ENCODE measurements at regions of chr9 and their contacts with region 1.

Region 1: DNA sequence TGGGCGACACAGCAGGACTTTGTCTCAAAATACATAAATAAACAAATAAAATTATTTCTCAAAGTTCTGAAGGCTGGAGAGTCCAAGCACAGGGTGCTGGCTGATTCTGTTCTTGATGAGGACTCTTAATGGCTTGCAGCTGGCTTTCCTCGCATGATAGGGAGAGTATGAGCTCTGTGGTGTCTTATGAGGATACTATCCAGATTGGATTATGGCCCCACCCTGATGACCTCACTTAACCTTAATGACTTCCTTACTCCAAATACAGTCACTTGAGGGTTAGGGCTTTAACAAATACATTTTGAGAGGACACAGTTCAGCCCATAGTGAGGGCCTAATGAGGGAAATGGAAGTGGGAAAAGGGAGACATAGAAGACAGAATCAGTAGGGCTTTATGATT is 87.7 kb downstream of the FOCAD start:
- DNase-seq: no peak
- H3K4me3 ChIP-seq: no peak overlapping the region
- H3K27ac ChIP-seq: no peak overlapping the region
- H3K4me1 ChIP-seq: no peaks in the 10 kb centered on the region
- H3K27me3 ChIP-seq: no peaks in the 10 kb centered on the region
- CTCF ChIP-seq: no peak
- POLR2A ChIP-seq: no peak

Region 2: DNA sequence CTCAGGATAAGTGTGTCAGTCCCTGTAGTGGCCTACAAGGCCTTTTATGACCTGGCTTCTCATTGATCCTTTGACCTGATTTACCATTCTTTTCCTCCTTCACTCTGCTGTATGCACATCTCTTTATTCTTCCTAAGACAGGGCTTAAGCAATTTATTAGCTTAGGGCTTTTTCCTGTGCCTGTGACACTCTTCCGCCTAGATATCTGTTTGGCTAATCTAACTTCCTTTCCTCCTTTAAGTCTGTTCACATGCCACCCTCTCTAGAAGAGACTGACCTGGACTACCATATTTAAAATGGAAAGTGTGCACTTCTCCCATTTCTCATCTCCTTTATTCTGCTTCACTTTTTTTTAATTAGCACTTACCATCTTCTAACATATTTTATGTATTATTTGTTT is 58.6 kb before region 1 on chr9:
- intact Hi-C with region 1: loop called in 1 of 2 experiments (anchors 10 kb)
- DNase-seq: no peak
- H3K4me3 ChIP-seq: no peak overlapping the region
- H3K27ac ChIP-seq: no peak overlapping the region
- H3K4me1 ChIP-seq: peaks cover 6 to 15% of the 10 kb centered on the region in 2 donors
- H3K27me3 ChIP-seq: no peaks in the 10 kb centered on the region
- CTCF ChIP-seq: no peak
- POLR2A ChIP-seq: no peak

Region 3: GRCh38 chr9:20832775-20833174 is 61.0 kb after region 1 on chr9:
- intact Hi-C with region 1: no loop called
- DNase-seq: no peak
- H3K4me3 ChIP-seq: no peak overlapping the region
- H3K27ac ChIP-seq: no peak overlapping the region
- H3K4me1 ChIP-seq: peaks cover 16 to 17% of the 10 kb centered on the region in 2 donors
- H3K27me3 ChIP-seq: no peaks in the 10 kb centered on the region
- CTCF ChIP-seq: no peak
- POLR2A ChIP-seq: no peak

Measured in adrenal gland (tissue), 19 donors.